ENCODE measurements at regions of chr6 and their contacts with region 1.

Region 1: DNA sequence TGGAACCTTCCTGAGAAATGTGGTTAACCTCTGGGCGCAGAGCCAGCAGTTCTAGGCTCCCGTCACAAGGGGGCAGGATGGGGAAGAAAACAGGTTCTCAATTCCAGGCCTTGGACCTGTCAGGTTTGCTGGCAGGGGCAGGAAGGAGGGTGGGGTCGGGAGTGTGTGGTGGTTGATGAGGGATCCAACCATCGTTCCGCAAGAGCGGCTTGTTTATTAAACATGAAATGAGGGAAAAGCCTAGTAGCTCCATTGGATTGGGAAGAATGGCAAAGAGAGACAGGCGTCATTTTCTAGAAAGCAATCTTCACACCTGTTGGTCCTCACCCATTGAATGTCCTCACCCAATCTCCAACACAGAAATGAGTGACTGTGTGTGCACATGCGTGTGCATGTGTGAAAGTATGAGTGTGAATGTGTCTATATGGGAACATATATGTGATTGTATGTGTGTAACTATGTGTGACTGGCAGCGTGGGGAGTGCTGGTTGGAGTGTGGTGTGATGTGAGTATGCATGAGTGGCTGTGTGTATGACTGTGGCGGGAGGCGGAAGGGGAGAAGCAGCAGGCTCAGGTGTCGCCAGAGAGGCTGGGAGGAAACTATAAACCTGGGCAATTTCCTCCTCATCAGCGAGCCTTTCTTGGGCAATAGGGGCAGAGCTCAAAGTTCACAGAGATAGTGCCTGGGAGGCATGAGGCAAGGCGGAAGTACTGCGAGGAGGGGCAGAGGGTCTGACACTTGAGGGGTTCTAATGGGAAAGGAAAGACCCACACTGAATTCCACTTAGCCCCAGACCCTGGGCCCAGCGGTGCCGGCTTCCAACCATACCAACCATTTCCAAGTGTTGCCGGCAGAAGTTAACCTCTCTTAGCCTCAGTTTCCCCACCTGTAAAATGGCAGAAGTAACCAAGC is 29.6 kb downstream of the SRSF3 start:
- DNase-seq: peak; percentile 74 to 82
- H3K4me3 ChIP-seq: no peak overlapping the region
- H3K4me3 Mint-ChIP-seq: peak overlapping the region; percentile 24
- H3K27ac Mint-ChIP-seq: peak overlapping the region; percentile 25
- H3K4me1 ChIP-seq: peaks cover 15% of the 10 kb centered on the region
- H3K4me1 Mint-ChIP-seq: peaks cover 20% of the 10 kb centered on the region
- H3K27me3 ChIP-seq: no peaks in the 10 kb centered on the region
- H3K27me3 Mint-ChIP-seq: no peaks in the 10 kb centered on the region
- CTCF ChIP-seq: peak; percentile 77 to 90

Region 2: GRCh38 chr6:36546920-36547645 is 76.7 kb before region 1 on chr6 and contains the start of gene STK38:
- CTCF ChIA-PET with region 1: no interaction called
- POLR2A ChIA-PET with region 1: no interaction called
- intact Hi-C with region 1: no loop called
- DNase-seq: peak; percentile 89 to 90
- H3K4me3 ChIP-seq: peak within 1 kb of the TSS; percentile 75
- H3K4me3 Mint-ChIP-seq: peak within 1 kb of the TSS; percentile 99
- H3K27ac Mint-ChIP-seq: peak within 1 kb of the TSS; percentile 95
- H3K4me1 ChIP-seq: peaks cover 6% of the 10 kb centered on the region; the same call in 1 of the 2 replicates
- H3K4me1 Mint-ChIP-seq: peaks cover 8% of the 10 kb centered on the region
- H3K27me3 ChIP-seq: no peaks in the 10 kb centered on the region
- H3K27me3 Mint-ChIP-seq: no peaks in the 10 kb centered on the region
- CTCF ChIP-seq: peak in 1 of 2 experiments; percentile 19
- total RNA-seq, gene STK38: 27.5 and 30.8 TPM in 2 replicates

Region 3: DNA sequence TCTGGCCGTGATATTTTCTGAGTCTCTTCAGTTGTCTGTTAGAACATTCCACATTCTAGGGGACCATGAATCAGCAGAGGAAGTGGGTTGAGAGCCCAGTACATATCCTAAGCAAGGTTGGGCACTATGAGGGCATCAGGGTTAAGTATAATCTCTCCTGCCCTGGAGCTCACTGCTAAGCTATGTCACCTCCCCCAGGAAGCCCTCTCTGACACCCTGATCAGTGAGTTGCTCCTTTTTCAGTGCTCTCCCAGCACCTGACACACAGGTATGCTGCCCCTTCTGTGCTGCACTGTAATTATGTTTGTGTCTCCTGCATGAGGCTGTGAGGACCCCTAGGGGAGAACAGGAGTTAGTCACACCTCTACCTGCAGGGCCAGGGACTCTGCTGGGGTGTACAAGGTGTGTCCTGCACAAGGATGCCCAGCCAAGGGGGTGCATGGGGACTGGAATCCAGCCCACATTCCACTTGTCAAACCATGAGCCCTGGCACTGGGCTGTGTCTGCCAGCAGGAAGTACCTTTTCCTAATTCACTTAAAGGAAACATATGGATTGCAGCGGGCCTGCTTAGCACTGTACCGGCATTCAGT is 77.7 kb after region 1 on chr6:
- CTCF ChIA-PET with region 1: interaction called, 3 read pairs
- POLR2A ChIA-PET with region 1: no interaction called
- intact Hi-C with region 1: loop called (anchors 1 kb)
- DNase-seq: no peak
- H3K4me3 ChIP-seq: no peak overlapping the region
- H3K4me3 Mint-ChIP-seq: no peak overlapping the region
- H3K27ac Mint-ChIP-seq: no peak overlapping the region
- H3K4me1 ChIP-seq: no peaks in the 10 kb centered on the region
- H3K4me1 Mint-ChIP-seq: no peaks in the 10 kb centered on the region
- H3K27me3 ChIP-seq: no peaks in the 10 kb centered on the region
- H3K27me3 Mint-ChIP-seq: peaks cover 13% of the 10 kb centered on the region
- CTCF ChIP-seq: peak in 1 of 2 experiments; percentile 26

Region 4: DNA sequence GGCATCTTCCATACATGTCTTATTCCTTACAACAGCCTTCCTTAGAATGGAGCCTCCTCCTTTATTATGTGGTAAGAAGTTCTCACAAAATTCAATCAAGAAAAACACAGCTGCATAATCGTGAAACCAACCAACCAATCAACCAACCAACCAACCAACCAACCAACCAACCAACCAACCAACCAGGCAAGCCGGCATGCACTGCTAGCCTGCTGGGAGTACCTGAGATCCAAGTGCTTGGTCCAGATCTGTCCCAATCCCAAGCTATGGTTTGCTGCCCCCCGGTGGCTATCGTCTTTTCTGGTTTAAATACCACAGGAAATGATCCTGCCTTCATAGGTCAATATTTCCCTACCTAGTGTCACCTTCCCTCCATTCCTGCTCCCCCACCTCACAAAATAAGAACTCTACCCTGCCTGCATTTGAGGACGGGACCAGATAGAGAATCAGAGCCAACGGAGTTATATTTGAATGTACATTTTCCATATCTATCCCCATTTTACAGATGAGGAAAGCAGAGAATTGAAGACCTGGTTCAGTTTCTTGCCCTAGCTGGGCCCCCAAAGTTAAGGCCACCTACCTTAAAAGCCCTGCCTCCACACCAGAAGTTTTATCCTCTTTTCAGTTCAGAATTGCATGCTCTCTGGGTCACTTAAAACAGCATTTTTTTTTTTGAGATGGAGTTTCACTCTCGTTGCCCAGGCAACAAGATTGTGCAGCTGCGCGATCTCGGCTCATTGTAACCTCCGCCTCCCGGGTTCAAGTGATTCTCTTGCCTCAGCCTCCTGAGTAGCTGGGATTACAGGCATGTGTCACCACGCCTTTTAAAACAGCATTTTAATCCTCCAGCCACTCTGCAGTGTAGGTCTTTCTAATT is 100.9 kb after region 1 on chr6:
- CTCF ChIA-PET with region 1: interaction called, 5 read pairs
- POLR2A ChIA-PET with region 1: no interaction called
- intact Hi-C with region 1: loop called (anchors 1 kb)
- DNase-seq: peak; percentile 74 to 80
- H3K4me3 ChIP-seq: no peak overlapping the region
- H3K4me3 Mint-ChIP-seq: no peak overlapping the region
- H3K27ac Mint-ChIP-seq: no peak overlapping the region
- H3K4me1 ChIP-seq: no peaks in the 10 kb centered on the region
- H3K4me1 Mint-ChIP-seq: peaks cover 7% of the 10 kb centered on the region
- H3K27me3 ChIP-seq: no peaks in the 10 kb centered on the region
- H3K27me3 Mint-ChIP-seq: no peaks in the 10 kb centered on the region
- CTCF ChIP-seq: peak; percentile 42 to 76

Region 5: GRCh38 chr6:36759148-36759759 is 135.5 kb after region 1 on chr6:
- CTCF ChIA-PET with region 1: interaction called, 5 read pairs
- POLR2A ChIA-PET with region 1: no interaction called
- intact Hi-C with region 1: loop called (anchors 1 kb)
- DNase-seq: peak; percentile 75 to 87
- H3K4me3 ChIP-seq: no peak overlapping the region
- H3K4me3 Mint-ChIP-seq: no peak overlapping the region
- H3K27ac Mint-ChIP-seq: no peak overlapping the region
- H3K4me1 ChIP-seq: no peaks in the 10 kb centered on the region
- H3K4me1 Mint-ChIP-seq: peaks cover 13% of the 10 kb centered on the region
- H3K27me3 ChIP-seq: no peaks in the 10 kb centered on the region
- H3K27me3 Mint-ChIP-seq: peaks cover 2% of the 10 kb centered on the region
- CTCF ChIP-seq: peak; percentile 94 to 99

Measured in Caco-2 (cell line).